Keratinocyte (primary cell): ENCODE measurements at regions of chr4 and their contacts with region 1.

Region 1: DNA sequence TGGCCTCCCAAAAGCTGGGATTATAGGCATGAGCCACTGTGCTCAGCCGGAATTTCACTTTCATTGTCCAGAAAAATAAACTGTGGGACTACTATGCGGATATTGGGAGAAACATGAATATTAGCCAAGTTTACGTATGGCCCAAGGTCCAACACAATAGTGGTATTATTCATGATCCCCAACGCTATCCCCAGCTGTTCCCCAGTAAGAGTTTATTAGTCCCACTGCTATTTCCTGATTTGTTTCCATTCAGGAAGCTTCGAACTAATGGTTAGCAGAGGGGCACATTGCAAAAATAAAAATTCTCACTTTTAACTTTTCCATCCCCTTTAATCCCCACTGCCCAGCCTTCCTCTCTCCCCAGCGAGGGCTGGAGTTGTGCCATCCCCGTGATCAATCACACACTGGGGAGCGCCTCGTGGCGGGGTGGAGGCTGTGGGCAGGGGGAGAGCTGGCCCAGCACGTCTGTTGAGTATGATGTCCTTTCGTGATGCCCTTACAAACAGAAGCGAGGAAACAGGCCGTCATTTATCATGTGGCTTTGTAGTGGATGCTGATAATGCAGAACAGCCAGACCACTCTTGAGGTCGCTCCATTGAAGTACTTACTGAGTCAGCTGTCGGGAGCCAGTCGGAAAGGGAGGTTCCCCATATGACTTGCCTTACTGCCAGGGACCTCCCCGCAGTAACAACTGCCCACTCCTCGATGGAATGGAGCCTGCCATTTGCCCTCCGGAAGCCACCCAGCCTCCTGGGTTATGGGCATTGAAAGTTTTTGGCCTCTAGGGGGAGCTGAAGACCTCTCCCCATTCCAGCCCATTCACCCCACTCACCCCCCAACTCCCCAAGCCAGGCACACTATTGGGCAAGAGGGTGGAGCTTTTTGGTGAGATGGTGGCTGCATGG is 117.0 kb downstream of the KDR start:
- DNase-seq: no peak
- H3K4me3 ChIP-seq: no peak overlapping the region
- H3K27ac ChIP-seq: no peak overlapping the region
- H3K4me1 ChIP-seq: no peaks in the 10 kb centered on the region
- H3K27me3 ChIP-seq: peaks cover 9% of the 10 kb centered on the region
- CTCF ChIP-seq: peak; percentile 47 to 70 (median 59)

Region 2: DNA sequence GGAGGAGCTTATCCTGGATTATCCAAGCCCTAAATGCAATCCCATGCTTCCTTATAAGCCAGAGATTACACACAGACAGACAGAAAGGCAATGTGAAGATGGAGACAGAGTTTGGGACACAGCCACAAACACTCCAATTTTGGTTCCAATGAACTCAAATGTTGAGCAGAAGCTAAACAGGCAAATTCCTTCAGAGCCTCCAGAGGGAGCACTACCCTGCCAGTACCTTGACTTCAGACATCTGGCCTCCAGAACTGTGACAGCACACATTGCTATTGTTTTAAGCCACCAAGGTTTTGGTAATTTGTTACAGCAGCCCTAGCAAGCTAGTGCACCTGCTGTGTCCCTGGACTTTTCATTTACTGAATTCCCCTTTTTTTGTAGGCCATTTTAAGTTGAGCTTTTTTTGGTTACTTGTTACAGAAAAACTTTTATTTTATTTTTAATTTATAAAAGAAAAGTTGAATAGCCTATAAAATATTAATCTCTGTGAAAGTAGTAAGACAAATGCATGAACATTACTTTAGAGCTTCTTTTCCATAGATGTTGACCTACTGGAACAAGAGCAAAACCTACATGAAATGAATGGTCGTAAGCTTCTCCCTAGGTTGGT is 304.2 kb after region 1 on chr4:
- dilution Hi-C with region 1: loop called (anchors 25 kb)
- DNase-seq: no peak
- H3K4me3 ChIP-seq: no peak overlapping the region
- H3K27ac ChIP-seq: no peak overlapping the region
- H3K4me1 ChIP-seq: no peaks in the 10 kb centered on the region
- H3K27me3 ChIP-seq: no peaks in the 10 kb centered on the region
- CTCF ChIP-seq: peak; percentile 67 to 87 (median 69)